ENCODE measurements at regions of chr11 and their contacts with region 1.

Region 1: DNA sequence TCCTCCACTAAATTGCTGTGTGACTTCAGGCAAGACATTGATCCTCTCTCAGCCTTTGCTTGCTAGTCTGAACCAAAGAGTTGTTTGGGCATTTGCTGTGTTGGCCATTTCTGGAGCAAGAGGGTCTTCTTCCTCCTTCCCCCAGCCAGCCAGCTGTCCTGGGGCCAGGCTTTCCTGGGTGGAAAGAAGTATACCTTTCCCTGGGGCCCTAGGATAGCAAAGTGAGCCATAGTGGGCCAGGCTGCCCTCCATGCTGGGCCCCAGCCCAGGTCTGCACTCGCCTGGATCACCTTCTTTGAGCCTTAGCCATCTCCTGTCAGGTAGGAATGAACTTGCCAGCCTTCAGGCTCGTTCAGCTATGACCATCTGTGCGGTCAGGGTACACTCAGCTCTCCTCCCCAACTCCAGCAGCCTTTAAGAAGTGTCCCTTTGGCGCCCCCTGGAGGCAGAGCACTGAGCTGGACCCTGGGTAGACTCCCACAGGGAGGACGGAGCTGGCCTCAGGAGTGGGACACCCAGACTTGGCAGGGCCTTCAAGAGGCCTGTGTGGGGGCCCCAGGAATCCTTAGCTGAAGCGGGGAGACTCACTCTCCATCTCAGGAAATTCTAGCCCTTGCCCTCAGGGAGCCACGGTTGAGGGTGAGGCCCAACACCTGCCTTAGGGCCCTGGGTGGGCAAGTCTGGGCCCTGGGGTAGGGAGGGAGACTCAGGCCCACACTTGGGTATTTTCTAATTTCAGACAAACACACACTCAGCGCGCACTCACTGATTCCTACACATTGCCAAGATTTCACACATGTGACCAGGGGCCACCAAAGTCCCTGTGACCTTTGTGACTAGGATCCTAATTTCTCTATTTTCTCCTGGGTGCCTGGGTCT is 35.6 kb upstream of the TPBGL start:
- DNase-seq: peak; percentile 90
- H3K4me3 Mint-ChIP-seq: no peak overlapping the region
- H3K27ac Mint-ChIP-seq: no peak overlapping the region
- H3K4me1 Mint-ChIP-seq: no peaks in the 10 kb centered on the region
- H3K27me3 Mint-ChIP-seq: no peaks in the 10 kb centered on the region

Region 2: DNA sequence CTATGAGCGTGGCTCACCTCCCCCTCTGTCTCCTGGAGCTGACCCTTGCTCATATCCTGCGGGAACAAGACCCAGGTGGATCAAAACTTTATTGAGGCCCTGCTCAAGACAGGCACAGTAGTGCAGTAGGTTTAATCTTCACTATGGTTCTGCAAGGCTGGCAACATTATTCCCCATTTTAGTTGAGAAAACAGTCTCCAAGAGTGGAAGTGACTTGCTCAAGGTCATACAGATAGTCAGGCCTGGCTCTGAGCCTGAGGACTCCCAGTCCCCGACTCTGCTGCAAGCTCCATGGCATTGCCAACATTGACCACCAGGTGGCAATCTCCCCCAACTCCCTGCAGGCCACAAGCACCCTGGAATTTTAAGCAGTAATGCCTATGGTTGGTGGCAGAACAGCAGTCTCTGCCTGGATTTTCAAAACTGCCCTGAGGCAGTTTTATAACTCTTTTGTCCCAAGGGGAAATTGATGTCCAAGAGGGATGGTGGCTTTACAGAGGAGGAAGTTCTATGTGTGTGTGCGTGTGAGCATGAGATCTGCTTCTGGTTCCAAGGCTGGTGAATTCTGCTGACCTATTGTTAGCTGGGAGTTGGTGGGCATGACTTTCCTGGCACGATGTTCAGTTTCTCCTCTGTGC is 182.0 kb before region 1 on chr11:
- CTCF ChIA-PET with region 1: interaction called, 105 read pairs
- POLR2A ChIA-PET with region 1: no interaction called
- intact Hi-C with region 1: loop called (anchors 1 kb)
- DNase-seq: peak; percentile 85
- H3K4me3 Mint-ChIP-seq: no peak overlapping the region
- H3K27ac Mint-ChIP-seq: no peak overlapping the region
- H3K4me1 Mint-ChIP-seq: no peaks in the 10 kb centered on the region
- H3K27me3 Mint-ChIP-seq: no peaks in the 10 kb centered on the region

Region 3: DNA sequence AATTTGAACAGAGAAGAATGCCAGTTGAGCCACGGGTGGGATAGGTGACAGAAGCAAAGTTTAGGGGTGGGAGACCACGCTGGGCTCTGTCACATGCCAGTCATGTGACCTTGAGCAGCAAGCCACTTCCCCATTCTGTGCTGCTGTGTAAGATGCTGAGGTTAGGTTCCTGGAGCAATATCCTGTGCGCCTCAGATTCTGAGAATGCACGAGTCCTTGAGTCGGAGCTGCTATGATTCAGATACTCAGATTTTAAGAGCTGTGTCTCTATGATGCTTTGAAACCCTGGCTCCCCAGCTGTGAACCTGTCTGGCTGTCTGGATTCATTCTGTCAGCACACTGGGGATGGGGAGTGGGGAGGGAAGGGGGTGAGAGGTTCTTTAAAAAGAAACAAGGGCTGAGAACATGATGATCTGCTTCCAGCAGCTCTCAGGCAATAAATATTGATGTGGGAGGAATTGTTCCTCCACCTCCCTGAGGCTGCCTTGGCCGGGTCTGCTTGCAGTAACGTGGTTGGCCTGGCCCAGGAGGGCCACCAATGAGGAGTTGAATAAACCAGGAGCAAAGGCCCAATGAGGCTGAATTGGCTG is 30.0 kb before region 1 on chr11:
- CTCF ChIA-PET with region 1: interaction called, 16 read pairs
- POLR2A ChIA-PET with region 1: no interaction called
- intact Hi-C with region 1: no loop called
- DNase-seq: peak; percentile 52
- H3K4me3 Mint-ChIP-seq: no peak overlapping the region
- H3K27ac Mint-ChIP-seq: peak overlapping the region; percentile 28
- H3K4me1 Mint-ChIP-seq: peaks cover 14% of the 10 kb centered on the region
- H3K27me3 Mint-ChIP-seq: no peaks in the 10 kb centered on the region

Region 4: DNA sequence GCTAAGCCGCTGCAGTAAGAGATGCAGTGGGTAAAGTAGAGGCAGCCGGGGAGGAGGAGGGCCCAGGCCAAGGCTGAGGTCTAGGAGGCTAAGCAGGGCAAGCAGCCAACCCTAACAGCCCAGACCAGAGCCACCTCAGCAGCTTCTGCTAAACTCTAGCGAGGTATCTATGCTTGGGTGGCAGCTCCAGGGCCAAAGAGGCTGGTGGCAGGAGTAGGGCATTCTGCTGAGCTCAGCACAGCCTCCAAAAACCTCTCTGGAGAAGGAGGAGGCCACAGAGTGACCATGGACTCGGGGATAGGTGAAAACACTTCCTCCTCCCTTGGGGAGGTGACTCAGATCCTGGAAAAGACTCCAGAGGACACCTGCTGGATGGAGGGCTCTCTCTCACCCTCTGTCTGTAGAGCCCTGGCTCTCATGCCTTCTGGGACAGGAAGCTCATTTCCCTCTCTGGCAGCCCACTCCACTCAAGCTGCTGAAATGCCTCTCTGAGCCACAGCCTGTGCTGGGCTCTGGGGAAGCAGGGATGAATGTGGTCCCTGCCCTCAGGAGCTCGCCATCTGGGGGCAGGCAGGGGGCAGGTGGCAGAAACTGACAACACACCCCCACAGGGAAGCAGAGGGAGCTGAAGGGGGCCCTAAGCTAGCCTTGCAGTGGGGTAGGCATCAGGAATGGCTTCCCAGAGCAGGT is 19.2 kb after region 1 on chr11:
- CTCF ChIA-PET with region 1: interaction called, 10 read pairs
- POLR2A ChIA-PET with region 1: no interaction called
- intact Hi-C with region 1: no loop called
- DNase-seq: no peak
- H3K4me3 Mint-ChIP-seq: no peak overlapping the region
- H3K27ac Mint-ChIP-seq: no peak overlapping the region
- H3K4me1 Mint-ChIP-seq: no peaks in the 10 kb centered on the region
- H3K27me3 Mint-ChIP-seq: peaks cover 1% of the 10 kb centered on the region